ENCODE measurements at regions of chr2 and their contacts with region 1.

Region 1: DNA sequence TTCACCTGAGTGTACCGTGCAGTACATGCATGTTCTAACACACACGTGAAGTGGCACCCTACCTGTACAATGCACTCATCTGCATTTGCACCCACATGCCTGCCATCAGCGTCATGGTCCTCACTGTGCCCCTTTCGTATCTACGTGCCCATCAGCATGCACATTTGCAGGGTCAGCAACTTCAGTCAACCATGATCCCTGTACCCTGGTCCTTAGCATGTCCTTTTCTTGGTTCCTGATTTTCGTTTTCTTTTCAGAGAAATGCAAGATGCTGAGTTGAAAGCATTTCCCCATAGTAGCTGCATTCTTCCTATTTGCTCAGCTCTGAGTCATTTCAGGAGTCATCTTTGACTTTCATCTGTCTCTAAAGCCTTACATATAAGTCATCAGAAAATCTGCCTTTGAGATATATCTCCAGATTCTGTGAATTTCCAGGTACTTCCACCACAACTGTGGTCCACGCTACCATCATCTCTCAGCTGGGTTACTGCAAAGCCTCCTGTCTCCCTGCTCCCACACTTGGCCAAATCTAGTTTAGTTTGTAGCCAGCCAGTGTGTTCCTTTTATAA is 14.7 kb upstream of the PUM2 start:
- DNase-seq: peak; percentile 83
- H3K4me3 Mint-ChIP-seq: peak overlapping the region; percentile 40
- H3K27ac Mint-ChIP-seq: peak overlapping the region; percentile 79
- H3K4me1 Mint-ChIP-seq: peaks cover 35% of the 10 kb centered on the region
- H3K27me3 Mint-ChIP-seq: peaks cover 7% of the 10 kb centered on the region

Region 2: GRCh38 chr2:20350753-20351554 is 14.4 kb before region 1 on chr2 and contains the start of gene PUM2:
- CTCF ChIA-PET with region 1: interaction called, 5 read pairs
- POLR2A ChIA-PET with region 1: interaction called, 50 read pairs
- intact Hi-C with region 1: loop called (anchors 1 kb)
- DNase-seq: peak; percentile 97
- H3K4me3 Mint-ChIP-seq: no peak within 1 kb of the TSS
- H3K27ac Mint-ChIP-seq: peak within 1 kb of the TSS; percentile 93
- H3K4me1 Mint-ChIP-seq: peaks cover 31% of the 10 kb centered on the region
- H3K27me3 Mint-ChIP-seq: no peaks in the 10 kb centered on the region
- total RNA-seq, gene PUM2: 122 TPM

Region 3: GRCh38 chr2:20430461-20431300 is 65.3 kb after region 1 on chr2:
- CTCF ChIA-PET with region 1: interaction called, 5 read pairs
- POLR2A ChIA-PET with region 1: no interaction called
- intact Hi-C with region 1: loop called (anchors 1 kb)
- DNase-seq: peak; percentile 62
- H3K4me3 Mint-ChIP-seq: no peak overlapping the region
- H3K27ac Mint-ChIP-seq: no peak overlapping the region
- H3K4me1 Mint-ChIP-seq: peaks cover 14% of the 10 kb centered on the region
- H3K27me3 Mint-ChIP-seq: peaks cover 4% of the 10 kb centered on the region

Region 4: GRCh38 chr2:20507166-20507692 is 141.9 kb after region 1 on chr2:
- CTCF ChIA-PET with region 1: no interaction called
- POLR2A ChIA-PET with region 1: no interaction called
- intact Hi-C with region 1: loop called (anchors 1 kb)
- DNase-seq: peak; percentile 61
- H3K4me3 Mint-ChIP-seq: no peak overlapping the region
- H3K27ac Mint-ChIP-seq: no peak overlapping the region
- H3K4me1 Mint-ChIP-seq: peaks cover 10% of the 10 kb centered on the region
- H3K27me3 Mint-ChIP-seq: peaks cover 3% of the 10 kb centered on the region

Region 5: DNA sequence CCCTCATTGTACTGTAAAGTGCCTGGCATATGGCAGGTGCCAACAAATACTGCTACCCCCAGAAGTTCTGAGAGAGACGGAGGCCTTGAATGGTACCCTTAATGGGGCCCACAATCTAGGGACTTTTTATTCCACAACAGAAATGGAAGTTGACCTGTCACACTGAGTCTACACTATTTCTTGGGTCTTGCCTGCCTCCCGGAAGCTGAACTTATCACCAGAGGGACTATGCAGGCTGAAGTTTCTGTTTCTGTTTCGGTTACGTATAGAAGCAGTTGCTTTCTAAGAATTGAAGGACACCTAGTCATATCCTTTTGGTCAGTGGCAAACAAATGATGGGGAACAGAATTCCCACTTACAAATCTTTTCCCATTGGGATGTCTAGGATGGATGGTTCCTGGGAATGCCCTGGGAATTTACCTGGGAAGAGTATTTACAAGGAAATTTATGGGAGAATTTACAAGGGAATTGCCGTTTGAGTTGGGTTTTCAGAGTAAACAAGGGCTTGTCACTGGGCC is 211.3 kb after region 1 on chr2:
- CTCF ChIA-PET with region 1: no interaction called
- POLR2A ChIA-PET with region 1: no interaction called
- intact Hi-C with region 1: loop called (anchors 1 kb)
- DNase-seq: peak; percentile 55
- H3K4me3 Mint-ChIP-seq: peak overlapping the region; percentile 11
- H3K27ac Mint-ChIP-seq: peak overlapping the region; percentile 86
- H3K4me1 Mint-ChIP-seq: peaks cover 32% of the 10 kb centered on the region
- H3K27me3 Mint-ChIP-seq: no peaks in the 10 kb centered on the region

Region 6: DNA sequence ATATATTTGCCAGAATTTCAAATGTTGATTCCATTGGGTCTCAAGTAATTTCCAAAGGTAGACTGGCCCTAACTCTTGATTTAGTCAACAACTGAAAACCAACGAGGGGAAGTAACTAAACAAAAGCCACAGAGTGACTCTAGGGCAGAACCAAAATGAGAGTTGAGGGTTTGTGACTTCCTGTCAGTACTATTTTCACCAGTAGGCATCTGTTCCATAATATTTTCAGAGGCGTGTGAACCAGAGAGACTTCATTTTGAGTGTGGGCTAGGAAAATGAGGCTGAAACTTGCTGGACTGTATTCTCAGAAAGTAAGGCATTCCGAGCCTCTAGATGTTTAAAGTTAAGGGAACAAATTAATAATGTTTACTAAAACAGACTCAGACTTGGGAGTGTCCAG is 372.2 kb after region 1 on chr2:
- CTCF ChIA-PET with region 1: no interaction called
- POLR2A ChIA-PET with region 1: no interaction called
- intact Hi-C with region 1: no loop called
- DNase-seq: no peak
- H3K4me3 Mint-ChIP-seq: no peak overlapping the region
- H3K27ac Mint-ChIP-seq: no peak overlapping the region
- H3K4me1 Mint-ChIP-seq: no peaks in the 10 kb centered on the region
- H3K27me3 Mint-ChIP-seq: no peaks in the 10 kb centered on the region

Region 7: DNA sequence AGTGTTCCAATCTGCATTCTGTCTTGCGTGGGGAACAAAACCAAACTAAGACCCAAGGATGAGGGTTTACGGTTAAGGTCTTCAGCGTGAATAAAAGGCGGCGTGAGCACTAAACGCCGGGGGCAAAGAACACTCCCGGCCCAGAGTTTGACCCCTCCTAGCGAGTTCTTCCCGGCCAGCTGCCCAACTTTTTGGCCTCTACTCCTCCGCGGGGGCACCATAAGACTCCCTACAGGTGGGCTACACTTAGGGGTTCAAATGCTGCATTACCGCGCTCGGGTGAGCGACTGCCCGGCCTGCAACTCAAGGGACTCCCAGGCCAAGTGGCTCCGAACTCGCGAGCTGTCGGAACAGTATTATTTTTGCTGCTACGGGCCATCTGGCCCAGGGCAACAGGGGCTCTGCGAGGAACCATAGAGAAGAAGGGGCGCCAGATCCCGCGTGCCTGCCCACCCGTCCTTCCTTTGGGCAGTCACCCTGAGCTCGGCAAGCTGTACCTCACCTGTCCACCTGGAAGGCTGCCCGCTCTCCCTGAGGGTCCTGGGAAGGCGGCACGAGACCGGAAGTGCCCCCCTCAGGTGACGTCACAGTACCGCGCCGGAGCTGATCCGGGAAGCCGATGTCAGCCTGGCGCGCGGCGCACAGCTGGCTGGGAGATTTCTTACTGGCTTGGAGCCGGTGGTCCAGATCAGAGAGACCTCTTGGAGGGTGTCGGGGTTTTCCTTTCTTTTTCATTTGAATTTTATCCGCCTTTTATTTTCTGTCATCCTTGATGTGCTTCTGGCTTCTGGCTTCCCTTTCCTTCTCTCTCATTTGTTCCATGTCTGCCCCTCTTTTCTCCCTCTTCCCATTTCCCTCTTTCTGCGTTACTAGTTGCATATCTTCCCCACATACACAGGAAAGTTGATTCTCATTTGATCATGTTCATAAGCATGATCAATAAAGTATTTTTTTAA is 457.5 kb after region 1 on chr2 and contains the start of gene LDAH:
- CTCF ChIA-PET with region 1: no interaction called
- POLR2A ChIA-PET with region 1: interaction called, 4 read pairs
- intact Hi-C with region 1: loop called (anchors 2 kb)
- DNase-seq: peak; percentile 90
- H3K4me3 Mint-ChIP-seq: peak within 1 kb of the TSS; percentile 96
- H3K27ac Mint-ChIP-seq: peak within 1 kb of the TSS; percentile 99
- H3K4me1 Mint-ChIP-seq: peaks cover 32% of the 10 kb centered on the region
- H3K27me3 Mint-ChIP-seq: no peaks in the 10 kb centered on the region
- total RNA-seq, gene LDAH: 35.2 to 38.7 TPM